ENCODE measurements at regions of chr15 and their contacts with region 1.

Region 1: GRCh38 chr15:42650208-42651066 is 75.0 kb downstream of the STARD9 start:
- DNase-seq: peak in 2 of 3 donors; percentile 33 to 76
- ATAC-seq: peak; percentile 94 to 96
- H3K4me3 ChIP-seq: no peak overlapping the region
- H3K27ac ChIP-seq: no peak overlapping the region
- H3K4me1 ChIP-seq: no peaks in the 10 kb centered on the region
- H3K27me3 ChIP-seq: no peaks in the 10 kb centered on the region

Region 2: DNA sequence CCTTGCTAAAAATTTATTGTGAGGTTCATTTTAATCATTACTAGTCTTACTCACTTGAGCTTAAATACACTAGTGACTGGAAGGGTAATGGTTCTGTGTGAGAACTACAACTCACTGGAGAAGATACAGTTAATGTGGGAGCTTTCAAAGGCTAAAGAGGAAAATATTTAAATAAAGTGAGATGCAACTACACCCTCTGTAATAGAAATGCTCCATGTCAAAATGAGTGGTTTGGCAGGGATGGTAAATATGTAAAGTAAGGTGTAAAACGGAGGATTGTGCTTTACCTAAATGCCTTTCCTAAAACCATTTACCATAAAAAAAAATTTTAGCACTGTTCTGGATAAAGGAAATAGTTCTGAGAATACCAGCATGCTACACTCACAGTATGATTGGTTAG is 117.2 kb before region 1 on chr15:
- intact Hi-C with region 1: no loop called
- DNase-seq: no peak
- ATAC-seq: no peak
- H3K4me3 ChIP-seq: no peak overlapping the region
- H3K27ac ChIP-seq: no peak overlapping the region
- H3K4me1 ChIP-seq: no peaks in the 10 kb centered on the region
- H3K27me3 ChIP-seq: no peaks in the 10 kb centered on the region

Region 3: DNA sequence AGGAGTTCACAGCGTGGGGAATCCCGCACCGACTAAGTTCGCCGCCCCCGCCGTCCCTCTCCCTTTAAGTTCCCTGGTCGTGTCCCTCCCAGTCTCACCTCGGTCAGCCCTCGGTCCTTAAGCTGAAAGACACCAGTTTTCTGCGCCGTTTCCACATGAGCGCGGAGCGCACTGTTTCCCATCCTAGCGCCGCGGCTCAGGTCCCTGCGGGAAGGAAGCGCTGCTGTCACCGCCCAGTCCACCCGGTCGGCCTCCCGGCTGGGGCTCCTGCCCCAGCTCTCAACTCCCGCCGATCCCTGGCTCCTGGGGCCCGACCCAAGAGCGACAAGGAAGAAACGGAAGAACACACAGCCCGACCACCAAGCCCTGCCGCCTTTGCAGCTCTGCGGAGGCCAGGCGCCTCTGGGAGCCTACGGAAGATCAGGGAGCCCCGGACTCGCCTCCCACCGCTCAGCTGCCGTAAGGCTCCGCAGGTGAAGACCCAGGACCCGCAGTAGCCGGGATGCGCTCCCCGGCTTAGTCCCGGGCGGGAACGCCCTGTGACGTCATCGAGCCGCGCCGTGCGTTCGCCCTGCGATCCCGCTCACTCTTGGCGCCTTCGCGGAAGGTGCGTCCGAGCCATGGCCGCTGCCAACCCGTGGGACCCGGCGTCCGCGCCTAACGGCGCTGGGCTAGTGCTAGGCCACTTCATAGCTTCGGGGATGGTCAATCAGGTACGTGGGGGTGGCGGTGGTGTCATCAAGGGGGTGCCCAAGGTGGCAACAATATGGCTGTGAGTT is 102.0 kb before region 1 on chr15 and contains the starts of genes HAUS2 and LRRC57:
- intact Hi-C with region 1: loop called in 2 of 4 experiments (anchors 5 to 10 kb)
- DNase-seq: peak; percentile 91 to 96 (median 95)
- ATAC-seq: peak; percentile 96 to 97
- H3K4me3 ChIP-seq: peak within 1 kb of the TSS; percentile 87
- H3K27ac ChIP-seq: peak within 1 kb of the TSS; percentile 79
- H3K4me1 ChIP-seq: no peaks in the 10 kb centered on the region
- H3K27me3 ChIP-seq: no peaks in the 10 kb centered on the region
- total RNA-seq, gene HAUS2: 10.0 to 15.2 (median 12.1) TPM
- total RNA-seq, gene LRRC57: 11.1 to 17.2 (median 14.4) TPM

Region 4: DNA sequence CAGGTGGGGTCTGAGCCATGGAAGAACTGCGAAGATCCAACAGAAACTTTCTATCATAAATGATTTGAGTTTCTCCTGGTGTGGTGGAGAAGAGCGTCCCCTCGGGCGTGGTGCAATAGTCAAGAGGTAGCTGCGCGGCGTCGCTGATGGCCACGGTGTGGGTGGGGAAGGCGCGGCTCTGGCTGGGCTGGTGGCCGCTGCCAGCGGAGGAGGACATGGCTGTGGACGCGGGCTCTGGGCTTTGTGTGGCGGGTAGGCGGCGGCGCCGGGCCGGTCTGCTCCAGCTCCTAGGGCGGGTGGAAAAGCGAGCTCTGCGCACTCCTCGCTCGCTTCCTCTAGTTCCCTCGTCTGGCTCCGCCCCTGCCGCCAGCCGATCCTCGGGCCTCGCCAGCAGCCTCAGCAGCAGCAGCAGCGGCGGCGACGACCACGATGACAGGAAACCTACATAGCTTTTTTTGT is 69.1 kb before region 1 on chr15:
- intact Hi-C with region 1: loop called in 1 of 4 experiments (anchors 10 kb)
- DNase-seq: peak; percentile 91 to 97 (median 96)
- ATAC-seq: peak; percentile 96 to 97
- H3K4me3 ChIP-seq: peak overlapping the region; percentile 45
- H3K27ac ChIP-seq: peak overlapping the region; percentile 86
- H3K4me1 ChIP-seq: peaks cover 10% of the 10 kb centered on the region
- H3K27me3 ChIP-seq: no peaks in the 10 kb centered on the region

Region 5: DNA sequence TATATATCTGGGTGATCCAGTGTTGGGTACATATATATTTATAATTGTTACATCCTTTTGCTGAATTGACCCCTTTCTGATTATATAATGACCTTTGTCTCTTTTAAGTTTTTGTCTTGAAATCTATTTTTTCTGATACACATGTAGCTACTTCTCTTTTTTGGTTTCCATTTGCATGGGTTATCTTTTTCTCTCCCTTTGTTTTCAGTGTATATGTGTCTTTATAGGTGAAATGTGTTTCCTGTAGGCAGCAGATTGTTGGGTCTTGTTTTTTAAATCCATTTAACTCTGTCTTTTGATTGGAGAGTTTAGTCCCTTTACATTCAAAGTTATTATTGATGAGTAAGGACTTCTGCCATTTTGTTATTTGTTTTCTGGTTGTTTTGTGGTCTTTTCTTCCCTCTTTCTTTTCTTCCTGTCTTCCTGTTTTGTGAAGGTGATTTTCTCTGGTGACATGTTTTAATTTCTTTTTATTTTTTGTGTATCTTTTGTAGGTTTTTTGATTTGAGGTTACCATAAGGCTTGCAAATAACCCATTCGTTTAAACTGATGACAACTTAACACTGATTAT is 18.2 kb before region 1 on chr15:
- intact Hi-C with region 1: loop called in 1 of 4 experiments (anchors 2 kb)
- DNase-seq: no peak
- ATAC-seq: no peak
- H3K4me3 ChIP-seq: no peak overlapping the region
- H3K27ac ChIP-seq: no peak overlapping the region
- H3K4me1 ChIP-seq: no peaks in the 10 kb centered on the region
- H3K27me3 ChIP-seq: no peaks in the 10 kb centered on the region

Region 6: DNA sequence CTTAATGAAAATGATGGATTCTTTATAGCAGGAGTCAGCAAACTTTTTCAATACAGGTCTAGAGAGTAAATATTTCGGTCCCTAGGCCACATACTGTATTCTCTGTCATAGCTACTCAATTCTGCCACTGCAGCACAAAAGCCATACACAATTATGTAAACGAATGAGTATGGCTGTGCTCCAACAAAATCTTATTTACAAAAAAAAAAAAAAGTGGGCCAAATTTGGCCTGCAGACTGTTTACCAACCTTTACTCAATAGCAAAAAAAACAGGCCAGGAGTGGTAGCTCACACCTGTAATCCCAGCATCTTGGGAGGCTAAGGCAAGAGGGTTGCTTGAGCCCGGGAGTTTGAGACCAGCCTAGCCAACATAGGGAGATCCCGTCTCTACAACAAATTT is 229.0 kb after region 1 on chr15:
- intact Hi-C with region 1: no loop called
- DNase-seq: no peak
- ATAC-seq: no peak
- H3K4me3 ChIP-seq: no peak overlapping the region
- H3K27ac ChIP-seq: no peak overlapping the region
- H3K4me1 ChIP-seq: no peaks in the 10 kb centered on the region
- H3K27me3 ChIP-seq: no peaks in the 10 kb centered on the region